Activated CD4-positive, alpha-beta T cell treated with anti-CD3 and anti-CD28 coated beads, Interleukin-2, amount 10 ng/mL, durations not matched to agents 24 days and 14 days (primary cell): ENCODE measurements at regions of chr1 and their contacts with region 1.

Region 1: GRCh38 chr1:66300972-66301451 is 232.9 kb upstream of the SGIP1 start:
- DNase-seq: peak; percentile 80
- H3K4me3 Mint-ChIP-seq: peak overlapping the region; percentile 76
- H3K27ac Mint-ChIP-seq: peak overlapping the region; percentile 82
- H3K4me1 Mint-ChIP-seq: peaks cover 31% of the 10 kb centered on the region
- H3K27me3 Mint-ChIP-seq: no peaks in the 10 kb centered on the region

Region 2: DNA sequence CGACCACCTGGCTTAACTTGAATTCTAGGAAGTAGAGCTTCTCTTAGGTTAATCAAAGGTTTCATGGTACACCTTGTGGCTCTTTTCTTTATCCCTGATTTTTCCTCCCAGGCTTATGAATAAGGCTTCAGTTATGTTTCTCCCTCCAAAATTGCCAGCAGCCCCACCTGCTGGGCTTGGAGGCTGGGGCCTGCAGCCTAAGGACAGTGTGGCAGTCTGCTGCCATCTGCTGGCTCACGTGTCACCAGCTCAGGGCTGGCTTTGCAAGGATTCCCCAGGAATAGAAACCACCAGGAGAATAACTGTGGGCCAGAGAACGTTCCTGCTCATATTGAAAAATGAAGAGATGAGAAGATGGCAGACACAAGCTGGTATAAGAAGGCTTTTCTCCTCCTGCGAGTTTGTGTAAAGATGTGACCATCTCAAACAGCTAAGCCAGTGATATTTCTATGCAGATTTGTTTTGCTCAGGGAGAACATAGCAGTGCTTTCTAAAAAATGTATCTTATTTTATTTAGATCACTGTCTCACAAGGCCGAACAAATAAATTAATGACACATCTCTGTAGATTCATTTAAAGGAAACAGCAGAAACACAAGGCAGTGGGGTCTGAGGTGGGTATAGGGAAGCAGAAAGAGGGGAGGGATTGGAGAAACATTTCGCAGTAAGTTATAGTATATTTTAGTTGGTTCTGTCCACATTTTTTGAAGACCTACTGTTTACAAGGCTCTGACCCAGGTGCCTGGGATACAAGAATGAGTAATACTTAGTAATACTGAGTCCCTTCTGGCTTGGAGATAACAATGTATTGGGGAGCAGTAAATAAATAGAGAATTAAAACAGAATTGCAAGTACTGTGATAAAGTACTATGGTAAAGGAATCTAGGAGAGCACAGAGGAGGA is 58.1 kb before region 1 on chr1:
- intact Hi-C with region 1: no loop called
- DNase-seq: peak; percentile 93
- H3K4me3 Mint-ChIP-seq: no peak overlapping the region
- H3K27ac Mint-ChIP-seq: no peak overlapping the region
- H3K4me1 Mint-ChIP-seq: peaks cover 25% of the 10 kb centered on the region
- H3K27me3 Mint-ChIP-seq: peaks cover 6% of the 10 kb centered on the region

Region 3: GRCh38 chr1:66258404-66259105 is 42.5 kb before region 1 on chr1:
- intact Hi-C with region 1: loop called (anchors 1 kb)
- DNase-seq: no peak
- H3K4me3 Mint-ChIP-seq: no peak overlapping the region
- H3K27ac Mint-ChIP-seq: peak overlapping the region; percentile 59
- H3K4me1 Mint-ChIP-seq: peaks cover 57% of the 10 kb centered on the region
- H3K27me3 Mint-ChIP-seq: no peaks in the 10 kb centered on the region